ENCODE measurements at regions of chr11 and their contacts with region 1.

Region 1: GRCh38 chr11:25938952-25939351 is 393.0 kb upstream of the ANO3 start:
- DNase-seq: no peak
- H3K4me3 ChIP-seq: no peak overlapping the region
- H3K27ac ChIP-seq: no peak overlapping the region
- H3K4me1 ChIP-seq: no peaks in the 10 kb centered on the region
- H3K27me3 ChIP-seq: no peaks in the 10 kb centered on the region
- CTCF ChIP-seq: no peak

Region 2: GRCh38 chr11:26420331-26420730 is 481.4 kb after region 1 on chr11:
- intact Hi-C with region 1: loop called (anchors 10 kb)
- DNase-seq: no peak
- H3K4me3 ChIP-seq: no peak overlapping the region
- H3K27ac ChIP-seq: no peak overlapping the region
- H3K4me1 ChIP-seq: no peaks in the 10 kb centered on the region
- H3K27me3 ChIP-seq: no peaks in the 10 kb centered on the region
- CTCF ChIP-seq: no peak

Measured in kidney (tissue), 22 donors.